ENCODE measurements at regions of chr19 and their contacts with region 1.

Region 1: GRCh38 chr19:56080669-56081401 is 40.3 kb downstream of the ZNF787 start:
- DNase-seq: peak; percentile 12
- H3K4me3 ChIP-seq: peak overlapping the region; percentile 49
- CTCF ChIP-seq: peak; percentile 71

Region 2: DNA sequence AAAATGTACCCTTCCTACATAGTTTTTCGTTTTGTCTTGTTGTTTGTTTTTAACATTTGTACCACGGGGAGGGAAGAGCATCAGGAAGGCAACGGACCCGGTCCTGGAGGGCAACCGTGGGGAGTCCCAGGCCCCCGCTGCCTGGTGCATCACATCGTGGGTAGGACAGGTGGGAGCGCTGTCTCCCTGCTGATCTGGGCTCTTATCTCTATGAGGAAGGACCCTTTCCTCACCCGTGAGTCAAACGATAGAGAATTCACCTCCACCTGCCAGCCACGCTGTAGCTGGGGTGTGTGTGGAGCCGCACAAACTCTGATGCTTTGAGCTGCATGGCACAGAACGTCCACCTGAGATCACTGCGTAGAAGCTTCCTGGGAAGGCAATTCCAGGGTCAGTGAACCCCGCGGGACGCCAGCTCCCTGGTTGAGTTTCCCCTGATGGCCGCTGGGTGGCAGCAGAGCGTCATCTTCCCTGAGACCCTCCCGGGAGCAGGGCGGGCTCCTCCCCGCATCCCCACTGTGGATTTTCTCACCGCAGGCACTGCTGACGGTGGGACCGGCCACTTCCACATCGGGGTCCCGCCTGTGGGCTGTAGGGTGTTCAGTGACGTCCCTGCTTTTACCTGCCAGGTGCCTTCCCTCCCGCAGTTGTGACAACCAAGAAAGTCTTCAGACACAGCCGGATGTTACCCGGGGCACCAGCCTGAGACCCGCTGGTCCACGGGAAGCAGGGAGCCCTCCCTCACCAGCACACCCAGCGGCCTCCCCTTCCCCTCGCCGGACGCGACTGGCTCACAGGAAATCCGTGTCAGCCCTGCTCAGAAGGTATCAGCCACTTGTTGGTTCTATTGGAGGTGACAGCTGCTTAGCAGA is 14.4 kb before region 1 on chr19:
- CTCF ChIA-PET with region 1: interaction called, 83 read pairs
- POLR2A ChIA-PET with region 1: no interaction called
- DNase-seq: no peak
- H3K4me3 ChIP-seq: peak overlapping the region; percentile 36
- CTCF ChIP-seq: peak; percentile 93

Region 3: GRCh38 chr19:56130006-56130405 is 49.2 kb after region 1 on chr19:
- CTCF ChIA-PET with region 1: no interaction called
- POLR2A ChIA-PET with region 1: no interaction called
- DNase-seq: no peak
- H3K4me3 ChIP-seq: no peak overlapping the region
- CTCF ChIP-seq: no peak

Region 4: DNA sequence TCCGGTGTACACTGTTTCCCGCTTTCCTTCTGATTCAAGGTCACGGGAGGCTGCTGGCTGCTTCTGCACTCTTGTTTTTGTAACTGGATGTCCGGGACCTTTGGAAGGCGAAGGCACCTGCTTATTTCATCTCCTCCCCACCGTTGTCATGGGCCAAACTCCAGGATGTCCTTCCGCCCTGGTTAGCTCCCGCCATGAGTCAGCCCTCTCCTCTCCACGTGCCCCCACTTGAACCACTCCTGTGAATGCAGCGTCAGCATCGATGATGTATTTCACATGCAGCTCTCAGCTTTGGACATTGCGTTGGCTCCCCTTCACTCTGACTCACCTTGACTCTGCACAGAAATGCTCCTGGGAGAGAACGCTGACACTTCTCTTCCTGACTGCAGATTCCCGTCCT is 89.4 kb after region 1 on chr19:
- CTCF ChIA-PET with region 1: interaction called, 202 read pairs
- POLR2A ChIA-PET with region 1: no interaction called
- DNase-seq: no peak
- H3K4me3 ChIP-seq: no peak overlapping the region
- CTCF ChIP-seq: no peak

Region 5: DNA sequence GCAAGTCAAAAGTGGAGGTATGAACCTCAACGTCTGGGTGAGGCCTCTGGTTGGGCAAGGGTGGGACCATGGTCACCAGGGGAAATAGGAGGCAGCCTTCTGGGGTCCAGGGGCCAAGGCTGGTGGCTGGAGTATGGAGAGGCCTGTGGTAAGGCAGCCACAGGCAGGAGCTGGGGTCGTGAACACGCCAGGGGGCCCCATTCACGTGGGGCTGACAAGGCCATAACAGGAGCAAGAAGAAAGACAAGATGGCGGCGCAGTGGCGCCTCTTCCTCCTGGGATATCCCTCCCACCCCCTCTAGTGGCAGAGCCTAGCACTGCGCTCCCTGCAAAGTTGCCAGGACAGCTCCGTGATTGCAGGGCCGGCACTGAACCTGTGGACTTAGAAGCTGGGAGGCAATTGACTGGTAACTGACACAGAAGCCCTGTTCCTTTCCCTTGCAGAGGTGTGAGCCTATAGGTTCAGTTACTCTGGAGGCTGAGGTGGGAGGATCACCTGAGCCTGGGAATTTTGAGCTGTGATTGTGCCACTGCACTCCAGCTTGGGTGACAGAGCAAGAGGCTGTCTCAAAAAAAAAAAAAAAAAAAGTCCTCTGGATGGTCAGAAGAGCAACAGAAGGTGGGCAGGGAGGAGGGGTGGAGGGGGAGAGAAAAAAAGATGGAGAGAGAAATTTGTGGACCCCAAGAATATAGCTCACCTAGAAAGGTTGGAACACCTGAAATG is 172.0 kb after region 1 on chr19:
- CTCF ChIA-PET with region 1: interaction called, 99 read pairs
- POLR2A ChIA-PET with region 1: interaction called, 3 read pairs
- DNase-seq: no peak
- H3K4me3 ChIP-seq: no peak overlapping the region
- CTCF ChIP-seq: peak; percentile 89

Region 6: GRCh38 chr19:56333505-56333904 is 252.7 kb after region 1 on chr19:
- CTCF ChIA-PET with region 1: interaction called, 43 read pairs
- POLR2A ChIA-PET with region 1: no interaction called
- DNase-seq: no peak
- H3K4me3 ChIP-seq: no peak overlapping the region
- CTCF ChIP-seq: peak; percentile 67

Region 7: GRCh38 chr19:56507446-56508289 is 426.8 kb after region 1 on chr19 and contains the start of gene ZNF471:
- CTCF ChIA-PET with region 1: no interaction called
- POLR2A ChIA-PET with region 1: no interaction called
- DNase-seq: peak; percentile 87
- H3K4me3 ChIP-seq: peak within 1 kb of the TSS; percentile 84
- CTCF ChIP-seq: no peak

Measured in AG04449 (cell line).